Activated T-helper 1 cell treated with anti-CD3 and anti-CD28 coated beads, Interleukin-12 subunit alpha, Interleukin-12 subunit beta, Interleukin-2, Interleukin-4 antibody, amounts not matched to agents 30 ng/mL and 10 ng/mL and 1 ng/mL, durations not matched to agents 14 hours and 24 hours and 36 hours (primary cell): ENCODE measurements at regions of chr4 and their contacts with region 1.

Region 1: GRCh38 chr4:151117371-151117962 is 18.0 kb downstream of the RPS3A start:
- DNase-seq: peak; percentile 36
- H3K4me3 Mint-ChIP-seq: no peak overlapping the region
- H3K27ac Mint-ChIP-seq: peak overlapping the region; percentile 63
- H3K4me1 Mint-ChIP-seq: peaks cover 9% of the 10 kb centered on the region
- H3K27me3 Mint-ChIP-seq: no peaks in the 10 kb centered on the region

Region 2: GRCh38 chr4:149584722-149585121 is 1532.7 kb before region 1 on chr4:
- intact Hi-C with region 1: no loop called
- DNase-seq: no peak
- H3K4me3 Mint-ChIP-seq: no peak overlapping the region
- H3K27ac Mint-ChIP-seq: no peak overlapping the region
- H3K4me1 Mint-ChIP-seq: no peaks in the 10 kb centered on the region
- H3K27me3 Mint-ChIP-seq: no peaks in the 10 kb centered on the region

Region 3: GRCh38 chr4:151195801-151196200 is 78.3 kb after region 1 on chr4:
- intact Hi-C with region 1: no loop called
- DNase-seq: no peak
- H3K4me3 Mint-ChIP-seq: no peak overlapping the region
- H3K27ac Mint-ChIP-seq: no peak overlapping the region
- H3K4me1 Mint-ChIP-seq: no peaks in the 10 kb centered on the region
- H3K27me3 Mint-ChIP-seq: peaks cover 6% of the 10 kb centered on the region

Region 4: DNA sequence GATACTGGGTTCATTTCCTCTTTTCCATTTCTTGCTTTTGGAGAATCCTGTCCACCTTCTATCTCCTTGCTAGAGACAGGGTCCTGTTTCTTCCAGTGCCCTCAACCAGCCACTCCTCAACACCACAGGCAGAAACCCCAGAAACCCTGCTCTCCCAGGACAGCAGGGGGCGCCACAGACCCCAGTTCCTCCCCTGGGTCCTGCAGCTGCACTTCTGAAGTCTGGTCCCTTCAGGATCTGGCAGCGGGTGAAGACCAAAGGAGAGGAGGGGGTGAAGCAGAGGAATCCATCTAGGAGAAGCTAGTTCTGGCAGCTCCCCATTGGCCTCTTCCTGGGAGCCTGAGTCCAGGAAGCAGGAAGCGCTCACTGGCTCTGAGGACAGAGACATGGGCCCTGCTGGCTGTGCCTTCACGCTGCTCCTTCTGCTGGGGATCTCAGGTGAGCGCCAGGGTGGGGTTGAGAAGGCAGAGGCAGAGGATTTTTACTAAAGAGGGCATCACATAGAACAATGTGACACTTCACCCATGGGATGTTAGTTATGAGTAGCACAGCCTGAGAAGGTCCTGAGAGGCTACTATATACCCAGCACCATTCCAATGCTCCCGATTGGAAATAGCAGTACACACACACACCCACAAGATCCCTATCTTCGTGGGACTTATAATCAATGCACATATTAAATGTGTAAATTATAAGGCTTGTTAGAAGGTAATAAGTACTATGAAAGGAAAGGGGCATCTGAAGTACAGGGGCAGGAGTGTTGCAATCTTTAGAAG is 159.5 kb after region 1 on chr4 and contains the start of gene PRSS48:
- intact Hi-C with region 1: loop called (anchors 5 kb)
- DNase-seq: peak; percentile 22
- H3K4me3 Mint-ChIP-seq: no peak within 1 kb of the TSS
- H3K27ac Mint-ChIP-seq: no peak within 1 kb of the TSS
- H3K4me1 Mint-ChIP-seq: no peaks in the 10 kb centered on the region
- H3K27me3 Mint-ChIP-seq: peaks cover 9% of the 10 kb centered on the region
- total RNA-seq, gene PRSS48: not detected in 2 replicates

Region 5: GRCh38 chr4:151604238-151604637 is 486.8 kb after region 1 on chr4:
- intact Hi-C with region 1: loop called (anchors 5 kb)
- DNase-seq: no peak
- H3K4me3 Mint-ChIP-seq: no peak overlapping the region
- H3K27ac Mint-ChIP-seq: no peak overlapping the region
- H3K4me1 Mint-ChIP-seq: no peaks in the 10 kb centered on the region
- H3K27me3 Mint-ChIP-seq: peaks cover 4% of the 10 kb centered on the region

Region 6: DNA sequence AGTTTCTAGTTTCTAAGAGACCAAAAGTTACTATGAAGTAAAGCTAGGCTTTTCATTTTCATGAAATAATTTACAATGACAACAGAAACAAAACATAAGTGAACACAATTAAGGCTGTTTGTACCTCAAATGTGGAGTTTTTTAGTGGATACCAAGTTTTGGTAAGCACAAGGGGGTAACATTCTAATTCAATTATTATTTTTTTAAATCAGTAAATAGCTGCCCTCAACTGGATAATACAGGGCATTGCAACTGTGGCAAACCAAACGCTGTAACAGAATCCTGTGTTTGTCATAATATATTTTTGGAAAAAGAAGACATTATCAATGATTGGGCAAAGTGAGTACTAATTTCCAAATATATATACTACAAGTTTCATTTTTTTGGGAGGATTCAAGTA is 1268.1 kb after region 1 on chr4:
- intact Hi-C with region 1: loop called (anchors 10 kb)
- DNase-seq: no peak
- H3K4me3 Mint-ChIP-seq: no peak overlapping the region
- H3K27ac Mint-ChIP-seq: no peak overlapping the region
- H3K4me1 Mint-ChIP-seq: peaks cover 21% of the 10 kb centered on the region
- H3K27me3 Mint-ChIP-seq: no peaks in the 10 kb centered on the region